B cell (primary cell): ENCODE measurements at regions of chr15 and their contacts with region 1.

Region 1: GRCh38 chr15:58987489-58988005 is at the start of gene RNF111:
- DNase-seq: peak; percentile 95
- ATAC-seq: peak; percentile 93
- H3K4me3 ChIP-seq: peak within 1 kb of the TSS; percentile 76 to 100 (median 88)
- H3K4me3 Mint-ChIP-seq: peak within 1 kb of the TSS; percentile 88
- H3K27ac ChIP-seq: peak within 1 kb of the TSS; percentile 71 to 77
- H3K27ac Mint-ChIP-seq: peak within 1 kb of the TSS; percentile 92
- H3K4me1 ChIP-seq: peaks cover 12 to 16% of the 10 kb centered on the region in 2 donors
- H3K4me1 Mint-ChIP-seq: peaks cover 41% of the 10 kb centered on the region
- H3K27me3 ChIP-seq: no peaks in the 10 kb centered on the region
- H3K27me3 Mint-ChIP-seq: no peaks in the 10 kb centered on the region
- CTCF ChIP-seq: no peak
- total RNA-seq, gene RNF111: 72.3 and 82.1 TPM in 2 replicates

Region 2: GRCh38 chr15:59104912-59105732 is 117.6 kb after region 1 on chr15 and contains the start of gene CCNB2:
- CTCF ChIA-PET with region 1: no interaction called
- POLR2A ChIA-PET with region 1: no interaction called
- intact Hi-C with region 1: loop called (anchors 10 kb)
- DNase-seq: peak; percentile 92
- ATAC-seq: peak; percentile 100
- H3K4me3 ChIP-seq: peak within 1 kb of the TSS; percentile 58 to 75 (median 66)
- H3K4me3 Mint-ChIP-seq: peak within 1 kb of the TSS; percentile 91
- H3K27ac ChIP-seq: peak within 1 kb of the TSS; percentile 50 to 79
- H3K27ac Mint-ChIP-seq: peak within 1 kb of the TSS; percentile 94
- H3K4me1 ChIP-seq: peaks cover 9 to 13% of the 10 kb centered on the region in 2 donors
- H3K4me1 Mint-ChIP-seq: peaks cover 14% of the 10 kb centered on the region
- H3K27me3 ChIP-seq: no peaks in the 10 kb centered on the region
- H3K27me3 Mint-ChIP-seq: no peaks in the 10 kb centered on the region
- CTCF ChIP-seq: no peak
- total RNA-seq, gene CCNB2: 0.67 TPM in 1 of 2 replicates, not detected in the other

Region 3: GRCh38 chr15:60397772-60398445 is 1410.4 kb after region 1 on chr15 and contains the start of gene ANXA2:
- CTCF ChIA-PET with region 1: no interaction called
- POLR2A ChIA-PET with region 1: no interaction called
- intact Hi-C with region 1: loop called (anchors 5 kb)
- DNase-seq: peak; percentile 83
- ATAC-seq: peak; percentile 79
- H3K4me3 ChIP-seq: peak within 1 kb of the TSS; percentile 42 to 82 (median 72)
- H3K4me3 Mint-ChIP-seq: peak within 1 kb of the TSS; percentile 96
- H3K27ac ChIP-seq: peak within 1 kb of the TSS; percentile 44 to 60
- H3K27ac Mint-ChIP-seq: peak within 1 kb of the TSS; percentile 97
- H3K4me1 ChIP-seq: peaks cover 12 to 21% of the 10 kb centered on the region in 2 donors
- H3K4me1 Mint-ChIP-seq: peaks cover 40% of the 10 kb centered on the region
- H3K27me3 ChIP-seq: no peaks in the 10 kb centered on the region
- H3K27me3 Mint-ChIP-seq: no peaks in the 10 kb centered on the region
- CTCF ChIP-seq: no peak
- total RNA-seq, gene ANXA2: 122 and 133 TPM in 2 replicates